CD4-positive, alpha-beta T cell (primary cell): ENCODE measurements at regions of chr12 and their contacts with region 1.

Region 1: GRCh38 chr12:52615208-52615868 is 3.0 kb downstream of the KRT73 start:
- DNase-seq: peak in 3 of 14 experiments; percentile 11 to 42 (median 35)
- ATAC-seq: peak; percentile 32
- H3K4me3 ChIP-seq: no peak overlapping the region
- H3K4me3 Mint-ChIP-seq: peak overlapping the region; percentile 62
- H3K27ac ChIP-seq: peak overlapping the region; percentile 47 to 61
- H3K27ac Mint-ChIP-seq: peak overlapping the region; percentile 89
- H3K4me1 ChIP-seq: peaks cover 89% of the 10 kb centered on the region
- H3K4me1 Mint-ChIP-seq: peaks cover 100% of the 10 kb centered on the region
- H3K27me3 ChIP-seq: no peaks in the 10 kb centered on the region
- H3K27me3 Mint-ChIP-seq: no peaks in the 10 kb centered on the region
- CTCF ChIP-seq: no peak

Region 2: DNA sequence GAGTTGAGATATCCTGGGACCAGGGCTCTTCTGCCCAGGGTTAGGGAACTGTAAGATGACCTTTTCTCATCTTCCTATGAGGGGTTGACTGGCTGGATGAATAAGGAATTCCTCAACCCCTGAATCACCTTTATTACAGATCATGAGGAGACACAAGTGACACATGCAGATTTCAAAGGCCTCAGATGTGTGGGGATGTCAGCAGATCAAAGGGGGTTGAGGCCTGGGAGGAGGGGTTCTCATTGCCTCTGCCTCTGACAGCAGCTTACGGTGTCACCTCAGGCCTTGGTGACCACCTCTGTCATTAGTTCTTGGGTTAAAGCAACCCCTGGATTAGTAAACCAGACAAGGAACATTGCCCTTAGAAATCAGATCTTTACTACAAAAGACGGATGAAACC is 12.0 kb before region 1 on chr12:
- CTCF ChIA-PET with region 1: no interaction called
- POLR2A ChIA-PET with region 1: interaction called, 3 read pairs
- intact Hi-C with region 1: loop called in 1 of 2 experiments (anchors 1 kb)
- DNase-seq: peak in 7 of 14 experiments; percentile 30 to 67 (median 54)
- ATAC-seq: peak; percentile 85
- H3K4me3 ChIP-seq: no peak overlapping the region
- H3K4me3 Mint-ChIP-seq: peak overlapping the region; percentile 32
- H3K27ac ChIP-seq: no peak overlapping the region
- H3K27ac Mint-ChIP-seq: peak overlapping the region; percentile 89
- H3K4me1 ChIP-seq: peaks cover 58% of the 10 kb centered on the region
- H3K4me1 Mint-ChIP-seq: peaks cover 82% of the 10 kb centered on the region
- H3K27me3 ChIP-seq: peaks cover 0 to 7% of the 10 kb centered on the region in 2 experiments
- H3K27me3 Mint-ChIP-seq: peaks cover 5% of the 10 kb centered on the region
- CTCF ChIP-seq: no peak

Region 3: GRCh38 chr12:52634266-52635056 is 19.1 kb after region 1 on chr12:
- CTCF ChIA-PET with region 1: no interaction called
- POLR2A ChIA-PET with region 1: interaction called, 27 read pairs
- intact Hi-C with region 1: loop called in 1 of 2 experiments (anchors 2 kb)
- DNase-seq: no peak
- ATAC-seq: no peak
- H3K4me3 ChIP-seq: no peak overlapping the region
- H3K4me3 Mint-ChIP-seq: peak overlapping the region; percentile 30
- H3K27ac ChIP-seq: no peak overlapping the region
- H3K27ac Mint-ChIP-seq: peak overlapping the region; percentile 89
- H3K4me1 ChIP-seq: peaks cover 55% of the 10 kb centered on the region
- H3K4me1 Mint-ChIP-seq: peaks cover 66% of the 10 kb centered on the region
- H3K27me3 ChIP-seq: no peaks in the 10 kb centered on the region
- H3K27me3 Mint-ChIP-seq: no peaks in the 10 kb centered on the region
- CTCF ChIP-seq: no peak

Region 4: DNA sequence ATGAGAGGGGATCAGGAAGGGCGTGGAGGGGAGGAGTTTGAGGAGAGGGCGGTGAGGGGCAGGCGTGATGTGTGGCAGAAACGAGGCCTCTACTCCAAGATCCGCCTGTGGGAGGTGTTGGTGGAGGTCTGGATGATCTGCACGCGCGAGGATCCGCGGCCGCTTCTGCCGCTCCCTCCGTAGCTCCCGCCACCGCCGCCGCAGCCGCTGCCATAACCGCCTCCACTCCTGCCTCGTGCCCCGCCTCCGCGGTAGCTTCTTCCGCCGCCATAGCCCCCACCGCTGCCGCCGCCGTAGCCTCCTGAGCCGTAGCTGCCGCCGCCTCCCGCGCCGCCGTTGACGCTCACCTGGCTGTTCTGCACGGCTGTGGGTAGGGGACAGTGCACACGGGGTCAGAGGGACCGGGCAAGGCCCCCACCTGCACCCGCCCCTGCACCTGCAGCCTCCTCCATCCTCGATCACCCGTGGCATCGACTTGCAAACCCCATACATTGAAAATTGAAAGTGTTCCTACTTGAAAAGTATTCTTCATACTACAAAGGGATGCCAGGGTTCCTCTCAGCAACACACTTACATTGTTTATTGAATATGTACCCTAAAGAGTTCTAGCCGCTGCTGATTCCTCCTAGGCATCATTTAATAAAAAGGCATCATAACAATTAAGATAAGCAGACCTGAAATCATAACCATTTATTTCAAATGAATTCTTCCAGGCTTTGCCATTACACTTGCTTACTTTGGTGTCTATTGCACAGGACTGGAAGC is 75.9 kb after region 1 on chr12:
- CTCF ChIA-PET with region 1: no interaction called
- POLR2A ChIA-PET with region 1: interaction called, 16 read pairs
- intact Hi-C with region 1: loop called (anchors 5 kb)
- DNase-seq: peak; percentile 43 to 77 (median 64)
- ATAC-seq: peak; percentile 87
- H3K4me3 ChIP-seq: peak overlapping the region; percentile 55
- H3K4me3 Mint-ChIP-seq: peak overlapping the region; percentile 83
- H3K27ac ChIP-seq: no peak overlapping the region
- H3K27ac Mint-ChIP-seq: peak overlapping the region; percentile 87
- H3K4me1 ChIP-seq: peaks cover 32% of the 10 kb centered on the region
- H3K4me1 Mint-ChIP-seq: peaks cover 64% of the 10 kb centered on the region
- H3K27me3 ChIP-seq: no peaks in the 10 kb centered on the region
- H3K27me3 Mint-ChIP-seq: no peaks in the 10 kb centered on the region
- CTCF ChIP-seq: no peak

Region 5: DNA sequence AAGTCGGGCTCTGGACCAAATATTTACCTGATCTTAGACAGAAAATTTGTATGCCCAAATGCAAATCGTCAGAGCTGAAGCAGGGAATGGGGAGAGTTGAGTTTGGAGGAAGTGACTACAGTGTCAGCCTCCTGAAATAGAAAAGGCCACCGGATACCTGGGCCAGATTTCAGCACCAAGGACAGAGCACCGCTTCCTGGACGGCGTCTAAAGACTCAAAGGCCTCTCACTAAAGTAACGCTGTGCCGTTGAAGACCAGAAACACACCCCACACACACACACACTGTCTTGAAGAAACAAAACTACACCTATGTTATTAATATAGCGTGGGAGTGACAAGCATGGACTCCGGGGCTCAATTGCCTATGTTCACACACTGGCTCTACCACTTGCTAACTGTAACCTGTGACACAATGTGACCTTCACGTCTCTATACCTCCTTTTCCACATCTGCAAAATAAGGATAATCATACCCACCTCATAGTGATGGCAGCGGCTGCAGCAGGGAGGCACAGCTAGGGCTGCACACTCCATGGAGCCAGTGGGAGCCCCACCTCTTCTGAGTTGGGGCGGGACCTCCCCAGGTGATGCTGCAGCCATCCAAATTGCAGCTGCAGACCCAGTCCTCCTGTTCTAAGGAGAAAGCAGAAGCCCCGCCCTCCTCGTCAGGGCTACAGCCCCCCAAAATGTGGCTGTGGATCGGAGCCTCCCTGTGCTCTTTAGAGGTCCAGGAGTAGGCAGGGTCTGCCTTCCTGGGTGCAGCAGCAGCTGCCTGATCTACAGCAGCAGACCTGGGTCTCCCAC is 126.3 kb after region 1 on chr12:
- CTCF ChIA-PET with region 1: no interaction called
- POLR2A ChIA-PET with region 1: no interaction called
- intact Hi-C with region 1: loop called in 1 of 2 experiments (anchors 5 kb)
- DNase-seq: peak; percentile 39 to 78 (median 58)
- ATAC-seq: peak; percentile 51
- H3K4me3 ChIP-seq: no peak overlapping the region
- H3K4me3 Mint-ChIP-seq: no peak overlapping the region
- H3K27ac ChIP-seq: no peak overlapping the region
- H3K27ac Mint-ChIP-seq: no peak overlapping the region
- H3K4me1 ChIP-seq: no peaks in the 10 kb centered on the region
- H3K4me1 Mint-ChIP-seq: peaks cover 5% of the 10 kb centered on the region
- H3K27me3 ChIP-seq: peaks cover 4 to 5% of the 10 kb centered on the region in 2 experiments
- H3K27me3 Mint-ChIP-seq: peaks cover 17% of the 10 kb centered on the region
- CTCF ChIP-seq: no peak